ENCODE measurements at regions of chr15 and their contacts with region 1.

Region 1: DNA sequence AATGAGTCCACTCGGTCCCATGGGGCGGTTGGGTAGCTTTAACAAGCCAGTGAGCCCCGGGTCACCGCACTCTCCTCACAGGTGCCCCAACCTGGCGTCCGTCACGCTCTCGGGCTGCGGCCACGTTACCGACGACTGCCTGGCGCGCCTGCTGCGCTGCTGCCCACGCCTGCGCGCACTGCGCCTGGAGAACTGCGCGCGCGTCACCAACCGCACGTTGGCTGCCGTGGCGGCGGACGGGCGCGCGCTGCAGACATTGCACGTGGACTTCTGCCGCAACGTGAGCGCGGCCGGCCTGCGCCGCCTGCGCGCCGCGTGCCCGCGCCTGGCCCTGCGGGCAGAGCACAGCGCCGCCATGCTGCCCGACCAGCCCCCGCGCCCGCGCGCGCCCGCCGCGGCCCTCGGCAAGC is 3.4 kb downstream of the FBXL22 start:
- DNase-seq: peak; percentile 85 to 91
- ATAC-seq: peak; percentile 64 to 91 (median 73)
- H3K4me3 ChIP-seq: peak overlapping the region; percentile 11 to 74 (median 68)
- H3K27ac ChIP-seq: peak overlapping the region; percentile 36 to 95 (median 89)
- H3K4me1 ChIP-seq: peaks cover 12 to 84% (median 59%) of the 10 kb centered on the region in 9 donors
- H3K27me3 ChIP-seq: no peaks in the 10 kb centered on the region
- CTCF ChIP-seq: peak in 4 of 9 donors; percentile 14 to 47 (median 34)

Region 2: GRCh38 chr15:63466378-63467192 is 134.0 kb before region 1 on chr15:
- intact Hi-C with region 1: loop called in 5 of 10 experiments (anchors 2 to 5 kb)
- DNase-seq: peak in 1 of 2 donors; percentile 40
- ATAC-seq: peak; percentile 55 to 86 (median 76)
- H3K4me3 ChIP-seq: no peak overlapping the region
- H3K27ac ChIP-seq: no peak overlapping the region
- H3K4me1 ChIP-seq: peaks cover 0 to 14% (median 0%) of the 10 kb centered on the region in 9 donors
- H3K27me3 ChIP-seq: peaks cover 0 to 4% (median 0%) of the 10 kb centered on the region in 7 donors
- CTCF ChIP-seq: peak; percentile 23 to 71 (median 60)

Region 3: GRCh38 chr15:63487076-63487757 is 113.4 kb before region 1 on chr15:
- intact Hi-C with region 1: loop called in 9 of 10 experiments (anchors 1 to 10 kb)
- DNase-seq: peak; percentile 89 to 92
- ATAC-seq: peak; percentile 86 to 95 (median 94)
- H3K4me3 ChIP-seq: peak overlapping the region in 1 of 10 donors; percentile 0
- H3K27ac ChIP-seq: peak overlapping the region in 1 of 10 donors; percentile 72
- H3K4me1 ChIP-seq: peaks cover 0 to 89% (median 0%) of the 10 kb centered on the region in 9 donors
- H3K27me3 ChIP-seq: no peaks in the 10 kb centered on the region
- CTCF ChIP-seq: peak; percentile 84 to 97 (median 94)

Region 4: GRCh38 chr15:63497642-63498467 is 102.8 kb before region 1 on chr15:
- intact Hi-C with region 1: loop called in 5 of 10 experiments (anchors 5 to 10 kb)
- DNase-seq: no peak
- ATAC-seq: peak in 4 of 8 donors; percentile 21 to 52 (median 37)
- H3K4me3 ChIP-seq: peak overlapping the region in 1 of 10 donors; percentile 38
- H3K27ac ChIP-seq: peak overlapping the region in 2 of 10 donors; percentile 3 to 100
- H3K4me1 ChIP-seq: peaks cover 2 to 99% (median 24%) of the 10 kb centered on the region in 9 donors
- H3K27me3 ChIP-seq: no peaks in the 10 kb centered on the region
- CTCF ChIP-seq: no peak

Region 5: DNA sequence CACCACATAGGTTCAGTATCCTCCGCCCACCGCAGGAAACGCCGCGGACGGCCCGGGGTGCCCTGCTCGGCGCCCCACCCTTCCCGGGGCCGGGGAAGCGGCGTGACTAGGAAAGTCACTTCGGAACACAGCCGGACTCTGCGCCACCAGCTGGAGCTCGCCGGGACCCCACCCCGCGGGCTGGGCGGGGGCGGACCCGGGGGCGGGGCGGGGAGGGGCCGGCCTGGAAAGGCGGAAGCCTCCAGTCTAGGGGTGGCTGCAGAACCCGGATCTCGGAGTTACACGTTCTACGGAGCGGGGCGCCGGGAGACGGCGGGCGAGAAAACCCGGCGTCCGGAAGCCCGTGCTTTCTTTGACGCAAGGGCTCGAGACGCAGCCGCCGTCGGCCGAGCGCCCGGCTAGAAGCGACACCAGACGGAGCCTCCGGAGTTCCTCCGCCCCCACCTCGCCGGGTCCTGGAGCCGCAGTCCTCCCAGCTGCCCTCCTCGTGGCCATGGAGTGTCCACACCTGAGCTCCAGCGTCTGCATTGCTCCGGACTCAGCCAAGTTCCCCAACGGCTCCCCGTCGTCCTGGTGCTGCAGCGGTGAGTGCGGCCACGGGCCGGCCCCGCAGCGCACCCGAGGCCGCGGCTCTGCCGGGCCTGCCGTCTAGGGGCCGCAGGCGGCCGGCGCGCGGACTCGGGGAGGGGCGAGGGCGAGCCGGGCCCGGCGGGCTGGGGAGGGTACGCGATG is 96.2 kb before region 1 on chr15 and contains the start of gene USP3:
- intact Hi-C with region 1: loop called in 8 of 10 experiments (anchors 5 to 10 kb)
- DNase-seq: peak; percentile 94 to 96
- ATAC-seq: peak; percentile 91 to 97 (median 94)
- H3K4me3 ChIP-seq: peak within 1 kb of the TSS; percentile 64 to 89 (median 84)
- H3K27ac ChIP-seq: peak within 1 kb of the TSS; percentile 78 to 100 (median 98)
- H3K4me1 ChIP-seq: peaks cover 5 to 84% (median 65%) of the 10 kb centered on the region in 9 donors
- H3K27me3 ChIP-seq: no peaks in the 10 kb centered on the region
- CTCF ChIP-seq: peak; percentile 22 to 65 (median 47)
- total RNA-seq, gene USP3: 11.4 to 23.7 (median 17.6) TPM

Region 6: DNA sequence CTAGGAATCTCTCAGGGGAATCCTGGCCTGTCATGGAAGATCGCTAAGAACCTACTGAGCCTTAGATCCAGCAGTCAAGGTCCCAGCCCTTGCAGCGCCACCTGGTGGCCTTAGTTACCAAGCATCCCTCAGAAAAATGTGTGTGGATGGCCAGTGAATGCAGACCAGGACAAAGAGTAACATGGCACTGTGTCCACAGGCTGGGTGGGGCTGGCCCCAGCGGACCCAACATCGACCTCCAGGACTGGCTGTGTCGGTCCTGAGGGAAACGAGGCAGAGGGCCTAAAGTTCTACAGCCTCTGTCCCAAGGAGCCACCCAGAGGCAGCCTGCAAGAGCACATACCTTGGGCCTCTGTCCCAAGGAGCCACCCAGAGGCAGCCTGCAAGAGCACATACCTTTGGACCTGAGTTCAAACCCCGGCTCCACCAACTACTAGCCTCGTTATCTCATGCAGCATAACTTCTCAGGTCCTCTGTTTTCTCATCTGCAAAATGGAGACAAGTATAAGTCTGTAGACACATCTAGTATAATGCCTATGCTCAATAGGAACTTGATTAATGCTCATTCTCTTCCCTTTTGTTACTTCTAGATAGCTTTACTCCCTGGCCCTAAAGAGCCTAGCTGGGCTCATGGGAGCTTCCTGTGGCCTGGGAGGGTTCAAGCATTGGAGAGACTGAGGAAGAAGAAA is 290.6 kb after region 1 on chr15:
- intact Hi-C with region 1: loop called in 1 of 10 experiments (anchors 10 kb)
- DNase-seq: peak; percentile 81
- ATAC-seq: peak; percentile 70 to 91 (median 77)
- H3K4me3 ChIP-seq: no peak overlapping the region
- H3K27ac ChIP-seq: peak overlapping the region in 1 of 10 donors; percentile 36
- H3K4me1 ChIP-seq: peaks cover 0 to 76% (median 21%) of the 10 kb centered on the region in 9 donors
- H3K27me3 ChIP-seq: no peaks in the 10 kb centered on the region
- CTCF ChIP-seq: peak; percentile 80 to 92 (median 90)